Naive thymus-derived CD4-positive, alpha-beta T cell (primary cell): ENCODE measurements at regions of chr19 and their contacts with region 1.

Region 1: GRCh38 chr19:18419195-18419698 is at the start of gene SSBP4:
- DNase-seq: peak; percentile 53 to 89 (median 72)
- ATAC-seq: peak; percentile 59
- H3K4me3 ChIP-seq: peak within 1 kb of the TSS; percentile 61
- H3K4me3 Mint-ChIP-seq: peak within 1 kb of the TSS; percentile 80 to 92 (median 85)
- H3K27ac ChIP-seq: peak within 1 kb of the TSS; percentile 63
- H3K27ac Mint-ChIP-seq: peak within 1 kb of the TSS; percentile 40 to 90 (median 67)
- H3K4me1 ChIP-seq: peaks cover 68 to 76% of the 10 kb centered on the region in 2 donors
- H3K4me1 Mint-ChIP-seq: peaks cover 40 to 84% (median 79%) of the 10 kb centered on the region in 7 donors
- H3K27me3 ChIP-seq: peaks cover 0 to 14% of the 10 kb centered on the region in 2 donors
- H3K27me3 Mint-ChIP-seq: peaks cover 8 to 27% (median 15%) of the 10 kb centered on the region in 5 donors
- total RNA-seq, gene SSBP4: 27.0 to 185 (median 40.7) TPM

Region 2: GRCh38 chr19:17932485-17933338 is 486.5 kb before region 1 on chr19 and contains the start of gene CCDC124:
- CTCF ChIA-PET with region 1: no interaction called
- POLR2A ChIA-PET with region 1: no interaction called
- intact Hi-C with region 1: no loop called
- DNase-seq: peak; percentile 89 to 96 (median 94)
- ATAC-seq: peak; percentile 99
- H3K4me3 ChIP-seq: peak within 1 kb of the TSS; percentile 69
- H3K4me3 Mint-ChIP-seq: peak within 1 kb of the TSS; percentile 85 to 97 (median 93)
- H3K27ac ChIP-seq: peak within 1 kb of the TSS; percentile 86
- H3K27ac Mint-ChIP-seq: peak within 1 kb of the TSS; percentile 90 to 97 (median 95)
- H3K4me1 ChIP-seq: peaks cover 10 to 11% of the 10 kb centered on the region in 2 donors
- H3K4me1 Mint-ChIP-seq: peaks cover 6 to 24% (median 15%) of the 10 kb centered on the region in 7 donors
- H3K27me3 ChIP-seq: no peaks in the 10 kb centered on the region
- H3K27me3 Mint-ChIP-seq: peaks cover 0 to 2% (median 0%) of the 10 kb centered on the region in 5 donors
- total RNA-seq, gene CCDC124: 28.7 to 60.5 (median 32.6) TPM

Region 3: GRCh38 chr19:18203863-18204393 is 215.3 kb before region 1 on chr19 and contains the start of gene RAB3A:
- CTCF ChIA-PET with region 1: no interaction called
- POLR2A ChIA-PET with region 1: interaction called, 13 read pairs
- intact Hi-C with region 1: loop called in 1 of 2 experiments (anchors 2 kb)
- DNase-seq: peak; percentile 95 to 100 (median 99)
- ATAC-seq: peak; percentile 95
- H3K4me3 ChIP-seq: peak within 1 kb of the TSS; percentile 90
- H3K4me3 Mint-ChIP-seq: peak within 1 kb of the TSS; percentile 83 to 98 (median 96)
- H3K27ac ChIP-seq: peak within 1 kb of the TSS; percentile 85
- H3K27ac Mint-ChIP-seq: peak within 1 kb of the TSS; percentile 87 to 99 (median 97)
- H3K4me1 ChIP-seq: peaks cover 15 to 16% of the 10 kb centered on the region in 2 donors
- H3K4me1 Mint-ChIP-seq: peaks cover 11 to 26% (median 22%) of the 10 kb centered on the region in 7 donors
- H3K27me3 ChIP-seq: no peaks in the 10 kb centered on the region
- H3K27me3 Mint-ChIP-seq: peaks cover 0 to 8% (median 0%) of the 10 kb centered on the region in 5 donors
- total RNA-seq, gene RAB3A: 5.7 to 16.7 (median 8.8) TPM

Region 4: DNA sequence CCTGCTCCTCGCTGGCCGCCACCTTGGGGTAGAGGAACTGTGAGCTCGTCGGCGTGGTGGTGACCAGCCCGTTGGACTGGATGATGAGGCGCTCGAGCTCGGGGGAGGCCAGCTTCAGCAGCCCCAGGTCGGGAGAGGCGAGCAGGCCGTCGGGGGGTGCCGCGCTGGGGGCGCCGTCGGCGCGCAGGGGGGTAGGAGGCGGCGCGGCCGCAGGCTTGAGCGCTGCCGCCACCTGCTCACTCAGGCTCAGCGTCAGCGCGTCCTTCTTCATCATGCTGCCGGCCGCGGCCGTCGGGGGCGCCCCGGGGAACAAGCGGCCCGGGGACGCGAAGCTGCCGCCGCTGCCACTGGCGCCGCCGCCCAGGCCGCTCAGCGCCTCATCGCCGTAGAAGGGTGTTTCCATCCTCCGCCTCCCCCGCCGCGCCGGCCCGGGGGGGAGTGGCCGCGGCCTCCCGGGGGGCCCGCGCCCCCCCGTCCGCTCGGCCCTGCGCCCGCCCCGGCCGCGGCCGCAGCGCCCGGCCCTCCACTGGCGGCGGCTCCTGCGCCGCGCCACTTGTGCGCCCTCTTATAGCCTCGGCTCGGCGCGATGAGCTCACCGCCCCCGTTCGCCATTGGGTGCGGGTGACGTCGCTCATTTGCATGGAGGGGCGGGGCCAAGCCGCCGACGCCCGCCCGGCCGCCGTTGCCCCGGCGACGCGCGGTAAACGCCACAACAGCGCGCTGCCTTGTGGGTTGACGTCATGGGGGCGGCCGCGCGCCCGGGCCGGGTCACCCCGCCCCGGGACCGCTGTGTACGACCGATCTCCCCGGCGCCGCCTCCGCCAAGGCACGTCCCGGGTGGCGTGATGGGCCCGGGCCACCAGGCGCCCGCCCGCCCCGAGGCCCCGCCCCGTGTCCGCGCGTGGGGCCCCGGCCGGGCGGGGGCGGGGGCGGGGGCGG is 137.9 kb before region 1 on chr19 and contains the start of gene JUND:
- CTCF ChIA-PET with region 1: interaction called, 4 read pairs
- POLR2A ChIA-PET with region 1: interaction called, 9 read pairs
- intact Hi-C with region 1: loop called in 1 of 2 experiments (anchors 5 kb)
- DNase-seq: peak; percentile 98 to 99 (median 99)
- ATAC-seq: peak; percentile 77
- H3K4me3 ChIP-seq: peak within 1 kb of the TSS; percentile 91
- H3K4me3 Mint-ChIP-seq: peak within 1 kb of the TSS; percentile 91 to 98 (median 94)
- H3K27ac ChIP-seq: peak within 1 kb of the TSS; percentile 100
- H3K27ac Mint-ChIP-seq: peak within 1 kb of the TSS; percentile 96 to 99 (median 98)
- H3K4me1 ChIP-seq: peaks cover 26 to 45% of the 10 kb centered on the region in 2 donors
- H3K4me1 Mint-ChIP-seq: peaks cover 29 to 56% (median 50%) of the 10 kb centered on the region in 7 donors
- H3K27me3 ChIP-seq: no peaks in the 10 kb centered on the region
- H3K27me3 Mint-ChIP-seq: peaks cover 0 to 9% (median 0%) of the 10 kb centered on the region in 5 donors
- total RNA-seq, gene JUND: 196 to 1,360 (median 279) TPM

Region 5: GRCh38 chr19:18322759-18323460 is 96.3 kb before region 1 on chr19 and contains the start of gene LSM4:
- CTCF ChIA-PET with region 1: no interaction called
- POLR2A ChIA-PET with region 1: no interaction called
- intact Hi-C with region 1: loop called (anchors 5 kb)
- DNase-seq: peak; percentile 95 to 100 (median 99)
- ATAC-seq: peak; percentile 98
- H3K4me3 ChIP-seq: peak within 1 kb of the TSS; percentile 86
- H3K4me3 Mint-ChIP-seq: peak within 1 kb of the TSS; percentile 80 to 88 (median 84)
- H3K27ac ChIP-seq: peak within 1 kb of the TSS; percentile 94
- H3K27ac Mint-ChIP-seq: peak within 1 kb of the TSS; percentile 89 to 99 (median 95)
- H3K4me1 ChIP-seq: peaks cover 47 to 55% of the 10 kb centered on the region in 2 donors
- H3K4me1 Mint-ChIP-seq: peaks cover 42 to 58% (median 51%) of the 10 kb centered on the region in 7 donors
- H3K27me3 ChIP-seq: no peaks in the 10 kb centered on the region
- H3K27me3 Mint-ChIP-seq: no peaks in the 10 kb centered on the region
- total RNA-seq, gene LSM4: 45.3 to 131 (median 56.2) TPM

Region 6: DNA sequence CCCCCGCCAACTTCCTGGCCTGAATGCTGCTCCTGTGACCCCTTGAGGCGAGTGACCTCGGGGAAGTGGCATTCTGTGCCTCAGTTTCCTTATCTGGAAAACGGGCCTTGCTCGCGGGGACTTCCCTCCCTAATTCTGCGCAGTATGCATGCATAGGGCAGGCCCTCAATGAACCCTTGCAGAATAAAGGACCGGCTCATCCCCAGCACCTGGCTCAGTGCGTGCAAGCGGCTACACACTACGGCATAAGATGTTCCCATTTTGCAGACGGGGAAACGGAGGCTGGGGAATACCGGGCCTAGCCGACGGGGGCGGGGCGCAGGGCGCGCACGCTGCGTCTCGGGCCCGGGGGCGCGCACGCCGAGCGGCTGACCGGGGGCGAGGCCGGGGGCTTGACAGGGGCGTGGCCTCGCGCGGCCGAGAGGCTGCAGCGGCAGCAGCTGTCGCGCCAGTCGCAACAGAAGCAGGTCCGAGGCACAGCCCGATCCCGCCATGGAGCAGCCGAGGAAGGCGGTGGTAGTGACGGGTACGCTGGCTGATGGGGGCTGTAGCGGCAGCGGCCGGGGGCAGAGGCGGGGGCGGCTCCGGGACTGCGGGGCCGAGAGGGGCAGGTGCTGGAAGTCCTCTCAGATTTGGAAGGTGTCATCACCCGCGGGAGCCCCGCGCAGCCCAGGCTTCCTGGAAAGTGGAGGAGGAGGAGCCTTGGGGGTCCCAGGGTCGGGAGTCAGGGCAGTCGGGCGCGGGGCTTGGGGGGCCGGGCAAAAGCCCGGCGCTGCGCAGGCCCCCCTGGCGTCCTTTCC is 78.9 kb before region 1 on chr19 and contains the start of gene PGPEP1:
- CTCF ChIA-PET with region 1: no interaction called
- POLR2A ChIA-PET with region 1: interaction called, 4 read pairs
- intact Hi-C with region 1: loop called in 1 of 2 experiments (anchors 5 kb)
- DNase-seq: peak in 8 of 9 donors; percentile 32 to 80 (median 54)
- ATAC-seq: peak; percentile 81
- H3K4me3 ChIP-seq: peak within 1 kb of the TSS; percentile 66
- H3K4me3 Mint-ChIP-seq: peak within 1 kb of the TSS; percentile 77 to 95 (median 90)
- H3K27ac ChIP-seq: peak within 1 kb of the TSS; percentile 74
- H3K27ac Mint-ChIP-seq: peak within 1 kb of the TSS; percentile 70 to 96 (median 90)
- H3K4me1 ChIP-seq: peaks cover 11 to 13% of the 10 kb centered on the region in 2 donors
- H3K4me1 Mint-ChIP-seq: peaks cover 12 to 25% (median 21%) of the 10 kb centered on the region in 7 donors
- H3K27me3 ChIP-seq: no peaks in the 10 kb centered on the region
- H3K27me3 Mint-ChIP-seq: no peaks in the 10 kb centered on the region
- total RNA-seq, gene PGPEP1: 26.6 to 57.1 (median 43.8) TPM

Region 7: GRCh38 chr19:18436671-18437490 is 17.6 kb after region 1 on chr19:
- CTCF ChIA-PET with region 1: interaction called, 3 read pairs
- POLR2A ChIA-PET with region 1: interaction called, 5 read pairs
- intact Hi-C with region 1: loop called in 1 of 2 experiments (anchors 1 kb)
- DNase-seq: peak in 8 of 9 donors; percentile 60 to 79 (median 72)
- ATAC-seq: peak; percentile 68
- H3K4me3 ChIP-seq: peak overlapping the region; percentile 41
- H3K4me3 Mint-ChIP-seq: peak overlapping the region; percentile 73 to 89 (median 83)
- H3K27ac ChIP-seq: peak overlapping the region; percentile 69
- H3K27ac Mint-ChIP-seq: peak overlapping the region in 6 of 9 donors; percentile 22 to 71 (median 42)
- H3K4me1 ChIP-seq: peaks cover 5 to 16% of the 10 kb centered on the region in 2 donors
- H3K4me1 Mint-ChIP-seq: peaks cover 0 to 37% (median 27%) of the 10 kb centered on the region in 7 donors
- H3K27me3 ChIP-seq: no peaks in the 10 kb centered on the region
- H3K27me3 Mint-ChIP-seq: no peaks in the 10 kb centered on the region

Region 8: GRCh38 chr19:18603255-18603957 is 184.2 kb after region 1 on chr19:
- CTCF ChIA-PET with region 1: no interaction called
- POLR2A ChIA-PET with region 1: no interaction called
- intact Hi-C with region 1: no loop called
- DNase-seq: no peak
- ATAC-seq: peak; percentile 75
- H3K4me3 ChIP-seq: no peak overlapping the region
- H3K4me3 Mint-ChIP-seq: peak overlapping the region in 3 of 10 donors; percentile 23 to 31 (median 25)
- H3K27ac ChIP-seq: no peak overlapping the region
- H3K27ac Mint-ChIP-seq: peak overlapping the region in 1 of 9 donors; percentile 3
- H3K4me1 ChIP-seq: no peaks in the 10 kb centered on the region
- H3K4me1 Mint-ChIP-seq: peaks cover 2 to 15% (median 11%) of the 10 kb centered on the region in 7 donors
- H3K27me3 ChIP-seq: peaks cover 4 to 19% of the 10 kb centered on the region in 2 donors
- H3K27me3 Mint-ChIP-seq: peaks cover 34 to 53% (median 45%) of the 10 kb centered on the region in 5 donors

Region 9: DNA sequence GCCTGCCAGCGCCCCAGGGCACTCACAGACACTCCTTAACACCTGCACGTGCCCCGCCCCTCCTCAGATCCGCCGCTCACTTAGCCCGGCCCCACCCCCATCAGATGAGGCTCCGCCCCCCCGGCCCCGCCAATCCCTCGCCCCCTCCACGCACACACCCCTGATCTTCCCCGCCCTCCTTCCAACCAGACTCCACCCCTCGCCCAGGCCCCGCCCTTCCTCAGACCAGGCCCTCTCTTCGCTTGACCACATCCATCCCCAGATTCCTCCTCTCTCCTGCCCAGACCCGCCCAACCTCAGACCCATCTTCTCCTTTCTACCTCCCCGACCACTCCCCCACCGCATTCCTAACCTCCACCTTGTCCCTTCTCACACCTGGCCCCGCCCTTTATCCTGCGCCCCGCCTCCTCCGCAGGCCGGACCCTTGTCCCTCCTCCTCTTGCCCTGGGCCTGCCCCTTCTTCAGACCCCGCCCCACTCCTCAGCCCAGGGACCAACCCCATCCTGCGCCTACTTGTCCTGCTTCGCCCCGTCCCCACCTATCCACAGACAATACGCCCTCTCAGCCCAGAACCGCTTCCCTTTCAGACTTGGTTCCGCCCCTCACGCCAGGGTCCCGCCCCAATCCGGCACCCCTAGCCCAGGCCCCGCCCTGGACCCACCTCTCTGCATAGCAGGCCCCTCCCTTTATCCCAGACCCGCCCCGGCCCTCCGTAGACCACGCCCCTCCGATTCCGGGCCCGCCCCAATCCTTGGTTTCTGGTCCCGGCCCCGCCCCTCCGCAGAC is 217.1 kb after region 1 on chr19:
- CTCF ChIA-PET with region 1: no interaction called
- POLR2A ChIA-PET with region 1: no interaction called
- intact Hi-C with region 1: no loop called
- DNase-seq: peak; percentile 97 to 100 (median 98)
- ATAC-seq: peak; percentile 95
- H3K4me3 ChIP-seq: peak overlapping the region; percentile 77
- H3K4me3 Mint-ChIP-seq: peak overlapping the region; percentile 71 to 100 (median 88)
- H3K27ac ChIP-seq: peak overlapping the region; percentile 88
- H3K27ac Mint-ChIP-seq: peak overlapping the region; percentile 70 to 96 (median 87)
- H3K4me1 ChIP-seq: peaks cover 6 to 19% of the 10 kb centered on the region in 2 donors
- H3K4me1 Mint-ChIP-seq: peaks cover 23 to 48% (median 36%) of the 10 kb centered on the region in 7 donors
- H3K27me3 ChIP-seq: no peaks in the 10 kb centered on the region
- H3K27me3 Mint-ChIP-seq: peaks cover 0 to 18% (median 3%) of the 10 kb centered on the region in 5 donors

Region 10: DNA sequence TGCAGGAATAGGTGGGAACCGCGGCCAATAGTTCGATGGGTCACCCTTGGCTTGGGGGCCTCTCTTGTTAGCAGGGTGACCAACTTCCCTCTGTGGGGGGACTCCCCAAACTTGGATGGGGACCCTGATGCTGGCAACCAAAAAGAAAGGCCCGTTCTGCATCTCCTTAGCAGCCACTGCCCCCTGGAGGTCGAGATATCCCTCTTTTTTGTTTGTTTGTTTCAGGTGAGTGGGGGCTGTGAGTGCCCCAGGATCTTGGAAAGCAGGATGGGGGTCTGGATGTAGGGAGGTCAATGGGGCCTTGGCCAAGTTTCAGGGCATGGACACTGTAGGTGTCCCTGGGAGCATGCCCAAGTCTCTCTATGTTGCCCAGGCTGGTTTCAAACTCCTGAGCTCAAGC is 256.5 kb after region 1 on chr19:
- CTCF ChIA-PET with region 1: no interaction called
- POLR2A ChIA-PET with region 1: no interaction called
- intact Hi-C with region 1: no loop called
- DNase-seq: peak in 4 of 9 donors; percentile 15 to 33 (median 22)
- ATAC-seq: no peak
- H3K4me3 ChIP-seq: no peak overlapping the region
- H3K4me3 Mint-ChIP-seq: no peak overlapping the region
- H3K27ac ChIP-seq: no peak overlapping the region
- H3K27ac Mint-ChIP-seq: no peak overlapping the region
- H3K4me1 ChIP-seq: no peaks in the 10 kb centered on the region
- H3K4me1 Mint-ChIP-seq: no peaks in the 10 kb centered on the region
- H3K27me3 ChIP-seq: no peaks in the 10 kb centered on the region
- H3K27me3 Mint-ChIP-seq: no peaks in the 10 kb centered on the region

Region 11: GRCh38 chr19:18831524-18832305 is 412.5 kb after region 1 on chr19 and contains the start of gene UPF1:
- CTCF ChIA-PET with region 1: no interaction called
- POLR2A ChIA-PET with region 1: interaction called, 3 read pairs
- intact Hi-C with region 1: loop called in 1 of 2 experiments (anchors 5 kb)
- DNase-seq: peak; percentile 92 to 99 (median 96)
- ATAC-seq: peak; percentile 93
- H3K4me3 ChIP-seq: peak within 1 kb of the TSS; percentile 95
- H3K4me3 Mint-ChIP-seq: peak within 1 kb of the TSS; percentile 89 to 97 (median 92)
- H3K27ac ChIP-seq: peak within 1 kb of the TSS; percentile 90
- H3K27ac Mint-ChIP-seq: peak within 1 kb of the TSS; percentile 83 to 96 (median 90)
- H3K4me1 ChIP-seq: peaks cover 17 to 23% of the 10 kb centered on the region in 2 donors
- H3K4me1 Mint-ChIP-seq: peaks cover 36 to 42% (median 39%) of the 10 kb centered on the region in 7 donors
- H3K27me3 ChIP-seq: no peaks in the 10 kb centered on the region
- H3K27me3 Mint-ChIP-seq: peaks cover 0 to 18% (median 6%) of the 10 kb centered on the region in 5 donors
- total RNA-seq, gene UPF1: 98.7 to 148 (median 113) TPM